ENCODE measurements at regions of chr5 and their contacts with region 1.

Region 1: GRCh38 chr5:62779010-62779422 is 200.4 kb downstream of the LRRC70 start:
- DNase-seq: no peak
- H3K4me3 Mint-ChIP-seq: no peak overlapping the region
- H3K27ac Mint-ChIP-seq: no peak overlapping the region
- H3K4me1 Mint-ChIP-seq: peaks cover 12% of the 10 kb centered on the region
- H3K27me3 Mint-ChIP-seq: no peaks in the 10 kb centered on the region

Region 2: GRCh38 chr5:62214701-62215100 is 564.3 kb before region 1 on chr5:
- intact Hi-C with region 1: loop called (anchors 5 kb)
- DNase-seq: no peak
- H3K4me3 Mint-ChIP-seq: no peak overlapping the region
- H3K27ac Mint-ChIP-seq: no peak overlapping the region
- H3K4me1 Mint-ChIP-seq: no peaks in the 10 kb centered on the region
- H3K27me3 Mint-ChIP-seq: peaks cover 21% of the 10 kb centered on the region

Region 3: DNA sequence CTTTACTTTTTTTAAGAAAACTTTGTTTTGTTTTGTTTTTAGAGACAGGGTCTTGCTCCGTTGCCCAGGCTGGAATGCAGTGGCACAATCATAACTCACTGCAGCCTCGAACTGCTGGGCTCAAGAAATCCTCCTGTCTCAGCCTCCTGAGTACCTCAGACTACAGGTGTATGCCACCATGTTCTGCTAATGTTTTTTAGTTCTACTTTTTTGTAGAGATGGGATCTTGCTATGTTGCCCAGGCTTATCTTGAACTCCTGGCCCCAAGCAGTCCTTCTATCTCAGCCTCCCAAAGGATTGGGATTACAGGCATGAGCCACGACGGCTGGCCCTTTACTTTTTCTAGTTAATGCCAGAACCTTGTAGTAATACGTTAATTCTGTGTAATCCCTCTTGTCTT is 330.5 kb before region 1 on chr5:
- intact Hi-C with region 1: loop called (anchors 1 kb)
- DNase-seq: no peak
- H3K4me3 Mint-ChIP-seq: no peak overlapping the region
- H3K27ac Mint-ChIP-seq: no peak overlapping the region
- H3K4me1 Mint-ChIP-seq: no peaks in the 10 kb centered on the region
- H3K27me3 Mint-ChIP-seq: no peaks in the 10 kb centered on the region

Region 4: GRCh38 chr5:62460578-62460983 is 318.4 kb before region 1 on chr5:
- intact Hi-C with region 1: loop called (anchors 1 kb)
- DNase-seq: no peak
- H3K4me3 Mint-ChIP-seq: no peak overlapping the region
- H3K27ac Mint-ChIP-seq: no peak overlapping the region
- H3K4me1 Mint-ChIP-seq: no peaks in the 10 kb centered on the region
- H3K27me3 Mint-ChIP-seq: no peaks in the 10 kb centered on the region